Calu3 (cell line): ENCODE measurements at regions of chr7 and their contacts with region 1.

Region 1: DNA sequence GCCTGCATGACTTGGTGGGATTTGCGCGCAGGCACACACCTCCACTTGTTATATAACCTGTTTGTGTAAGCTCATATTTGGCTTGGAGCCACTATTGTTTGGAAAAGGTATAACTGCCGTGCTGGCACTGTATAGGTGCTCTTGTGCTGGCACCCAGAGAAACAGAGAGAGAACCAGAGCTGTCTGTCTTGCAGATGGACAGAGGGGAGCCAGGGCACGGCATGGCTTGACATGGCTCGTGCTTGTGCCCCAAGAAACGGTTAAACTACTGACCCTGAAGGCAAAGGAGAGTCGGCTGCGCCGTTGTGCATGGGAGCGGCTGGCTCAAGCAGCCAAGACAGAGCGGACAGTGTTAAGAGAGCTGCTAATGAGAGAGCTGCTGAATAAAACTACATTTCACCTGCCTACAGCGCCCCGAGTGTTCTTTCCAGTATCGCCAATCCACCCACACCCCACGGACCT is 23.2 kb downstream of the RAPGEF5 start:
- DNase-seq: peak; percentile 60
- H3K4me3 Mint-ChIP-seq: peak overlapping the region; percentile 43
- H3K27ac Mint-ChIP-seq: peak overlapping the region; percentile 57
- H3K4me1 Mint-ChIP-seq: peaks cover 71% of the 10 kb centered on the region
- H3K27me3 Mint-ChIP-seq: no peaks in the 10 kb centered on the region
- CTCF ChIP-seq: no peak

Region 2: DNA sequence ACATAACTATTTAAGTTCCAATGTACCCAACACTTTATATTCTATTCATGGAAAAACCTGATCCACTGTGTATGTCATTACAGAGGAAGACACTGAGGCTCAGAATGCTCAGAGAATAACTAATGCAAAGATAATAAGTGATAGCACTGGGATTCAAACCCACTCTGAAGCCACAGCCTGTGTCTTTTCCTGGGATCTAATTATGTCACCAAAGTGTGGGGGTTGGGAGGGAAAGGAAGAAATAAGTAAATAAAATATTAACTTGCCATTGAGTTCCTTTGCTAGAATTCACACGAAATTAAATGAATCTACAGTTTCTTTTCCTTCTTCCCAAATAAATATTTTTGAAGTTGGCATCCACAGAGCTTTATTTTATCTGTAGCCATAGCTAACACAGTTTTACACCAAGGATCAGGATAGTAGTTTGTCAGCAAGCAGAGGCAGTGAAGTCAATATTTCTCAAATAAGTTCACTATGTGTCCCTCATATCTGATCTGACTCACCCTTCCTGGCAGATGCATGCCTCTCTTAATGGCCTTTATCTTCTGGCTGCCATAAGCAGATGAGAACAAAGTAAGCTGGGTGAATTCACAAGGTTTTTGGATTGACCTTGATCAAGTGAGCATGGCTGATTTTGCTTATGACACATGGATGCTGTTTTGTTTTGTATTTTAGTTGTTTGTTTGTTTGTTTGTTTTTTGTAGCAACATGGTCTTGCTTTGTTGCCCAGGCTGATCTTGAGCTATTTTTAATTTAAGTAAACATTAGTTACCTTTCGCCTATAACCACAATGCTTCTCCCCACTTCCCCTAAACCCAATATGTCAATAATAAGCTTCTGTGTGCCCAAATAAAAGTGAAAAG is 17.0 kb after region 1 on chr7:
- CTCF ChIA-PET with region 1: interaction called, 34 read pairs
- intact Hi-C with region 1: loop called (anchors 2 kb)
- DNase-seq: no peak
- H3K4me3 Mint-ChIP-seq: peak overlapping the region; percentile 64
- H3K27ac Mint-ChIP-seq: peak overlapping the region; percentile 84
- H3K4me1 Mint-ChIP-seq: peaks cover 75% of the 10 kb centered on the region
- H3K27me3 Mint-ChIP-seq: no peaks in the 10 kb centered on the region
- CTCF ChIP-seq: no peak

Region 3: DNA sequence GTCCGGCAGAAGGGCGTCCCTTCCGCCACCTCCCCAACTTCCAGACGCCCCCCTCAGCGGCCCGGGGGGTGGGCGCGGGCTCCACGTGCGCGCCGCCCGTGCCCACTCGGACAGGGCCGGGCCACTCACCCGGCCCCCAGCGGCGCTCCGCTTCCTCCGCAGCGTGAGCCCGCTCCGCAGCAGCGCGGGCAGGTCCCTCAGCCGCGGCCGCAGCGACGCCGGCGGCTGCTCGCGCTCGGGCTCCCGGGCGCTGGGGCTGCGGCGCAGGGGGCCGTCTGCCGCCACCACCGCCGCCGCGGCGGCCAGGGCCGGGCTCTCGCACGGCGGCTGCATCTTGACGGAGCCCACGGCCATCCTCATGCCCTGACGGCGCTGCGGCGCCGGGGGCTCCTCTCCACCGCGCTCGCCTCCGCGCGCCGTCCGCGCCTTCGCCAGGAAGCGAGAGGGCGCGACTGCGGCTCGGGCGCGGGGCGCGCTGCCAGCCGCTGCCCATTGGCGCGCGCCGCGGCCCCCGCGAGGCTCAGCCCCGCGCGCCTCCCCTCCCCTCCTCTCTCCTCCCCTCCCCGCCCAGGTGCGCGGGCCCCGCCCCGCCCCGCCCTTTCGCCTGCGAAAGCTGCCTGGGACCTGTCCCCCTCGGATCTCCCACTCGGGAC is 23.1 kb after region 1 on chr7 and contains the start of gene RAPGEF5:
- CTCF ChIA-PET with region 1: interaction called, 24 read pairs
- intact Hi-C with region 1: no loop called
- DNase-seq: peak; percentile 80
- H3K4me3 Mint-ChIP-seq: peak within 1 kb of the TSS; percentile 82
- H3K27ac Mint-ChIP-seq: peak within 1 kb of the TSS; percentile 70
- H3K4me1 Mint-ChIP-seq: peaks cover 62% of the 10 kb centered on the region
- H3K27me3 Mint-ChIP-seq: no peaks in the 10 kb centered on the region
- CTCF ChIP-seq: no peak
- total RNA-seq, gene RAPGEF5: 108 and 128 TPM in 2 replicates

Region 4: GRCh38 chr7:22445140-22445743 is 111.5 kb after region 1 on chr7:
- CTCF ChIA-PET with region 1: interaction called, 45 read pairs
- intact Hi-C with region 1: loop called (anchors 1 kb)
- DNase-seq: peak; percentile 88
- H3K4me3 Mint-ChIP-seq: peak overlapping the region; percentile 63
- H3K27ac Mint-ChIP-seq: peak overlapping the region; percentile 88
- H3K4me1 Mint-ChIP-seq: peaks cover 65% of the 10 kb centered on the region
- H3K27me3 Mint-ChIP-seq: no peaks in the 10 kb centered on the region
- CTCF ChIP-seq: no peak

Region 5: GRCh38 chr7:22452142-22452959 is 118.6 kb after region 1 on chr7:
- CTCF ChIA-PET with region 1: interaction called, 6 read pairs
- intact Hi-C with region 1: loop called (anchors 2 kb)
- DNase-seq: peak; percentile 91
- H3K4me3 Mint-ChIP-seq: peak overlapping the region; percentile 69
- H3K27ac Mint-ChIP-seq: peak overlapping the region; percentile 29
- H3K4me1 Mint-ChIP-seq: peaks cover 27% of the 10 kb centered on the region
- H3K27me3 Mint-ChIP-seq: no peaks in the 10 kb centered on the region
- CTCF ChIP-seq: peak; percentile 98

Region 6: DNA sequence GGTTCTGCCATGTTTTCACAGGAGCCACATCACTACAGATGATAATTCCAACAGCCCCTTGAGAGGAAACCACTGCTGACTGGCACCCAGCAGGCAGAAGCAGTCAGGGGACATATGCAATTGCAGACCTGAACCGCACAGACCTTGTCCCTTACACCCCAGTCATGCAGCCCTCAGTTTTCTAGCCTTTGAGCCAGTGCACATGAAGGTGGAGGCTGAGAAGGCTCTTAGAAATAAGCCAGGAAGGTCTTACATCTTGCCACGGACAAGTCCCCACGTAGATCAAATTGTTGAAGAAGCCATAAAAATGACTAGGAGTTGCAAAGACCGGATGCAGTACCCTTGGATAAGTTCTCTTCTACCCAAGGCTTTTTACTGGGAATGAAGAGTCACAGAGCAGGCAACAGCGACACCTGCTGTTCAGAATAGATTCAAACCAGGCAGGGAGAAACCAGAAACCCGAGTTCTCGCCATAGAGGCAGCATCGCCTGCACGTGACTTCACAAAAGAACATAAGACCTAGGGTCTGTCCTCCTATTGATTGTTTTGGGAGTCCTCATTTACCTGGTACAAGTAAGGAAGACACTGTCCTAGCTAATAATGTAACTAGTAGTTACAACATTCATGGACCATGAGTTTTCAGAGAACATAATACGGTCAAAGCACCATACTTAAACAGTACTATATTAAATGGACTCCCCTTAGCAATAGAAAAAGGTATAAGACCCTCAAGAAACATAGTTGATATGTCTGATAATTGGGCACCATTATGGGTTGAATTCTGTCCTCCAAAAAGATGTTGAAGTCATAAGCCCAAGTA is 155.1 kb after region 1 on chr7:
- CTCF ChIA-PET with region 1: no interaction called
- intact Hi-C with region 1: loop called (anchors 5 kb)
- DNase-seq: peak; percentile 85
- H3K4me3 Mint-ChIP-seq: no peak overlapping the region
- H3K27ac Mint-ChIP-seq: no peak overlapping the region
- H3K4me1 Mint-ChIP-seq: peaks cover 22% of the 10 kb centered on the region
- H3K27me3 Mint-ChIP-seq: no peaks in the 10 kb centered on the region
- CTCF ChIP-seq: peak; percentile 97